Activated CD4-positive, alpha-beta memory T cell treated with anti-CD3 and anti-CD28 coated beads, Interleukin-2, amount 10 ng/mL, durations not matched to agents 7 days and 5 days (primary cell): ENCODE measurements at regions of chr17 and their contacts with region 1.

Region 1: GRCh38 chr17:48636177-48637018 is 10.2 kb upstream of the HOXB9 start:
- DNase-seq: peak; percentile 74
- H3K4me3 Mint-ChIP-seq: no peak overlapping the region
- H3K27ac Mint-ChIP-seq: no peak overlapping the region
- H3K4me1 Mint-ChIP-seq: peaks cover 27% of the 10 kb centered on the region
- H3K27me3 Mint-ChIP-seq: peaks cover 93% of the 10 kb centered on the region

Region 2: DNA sequence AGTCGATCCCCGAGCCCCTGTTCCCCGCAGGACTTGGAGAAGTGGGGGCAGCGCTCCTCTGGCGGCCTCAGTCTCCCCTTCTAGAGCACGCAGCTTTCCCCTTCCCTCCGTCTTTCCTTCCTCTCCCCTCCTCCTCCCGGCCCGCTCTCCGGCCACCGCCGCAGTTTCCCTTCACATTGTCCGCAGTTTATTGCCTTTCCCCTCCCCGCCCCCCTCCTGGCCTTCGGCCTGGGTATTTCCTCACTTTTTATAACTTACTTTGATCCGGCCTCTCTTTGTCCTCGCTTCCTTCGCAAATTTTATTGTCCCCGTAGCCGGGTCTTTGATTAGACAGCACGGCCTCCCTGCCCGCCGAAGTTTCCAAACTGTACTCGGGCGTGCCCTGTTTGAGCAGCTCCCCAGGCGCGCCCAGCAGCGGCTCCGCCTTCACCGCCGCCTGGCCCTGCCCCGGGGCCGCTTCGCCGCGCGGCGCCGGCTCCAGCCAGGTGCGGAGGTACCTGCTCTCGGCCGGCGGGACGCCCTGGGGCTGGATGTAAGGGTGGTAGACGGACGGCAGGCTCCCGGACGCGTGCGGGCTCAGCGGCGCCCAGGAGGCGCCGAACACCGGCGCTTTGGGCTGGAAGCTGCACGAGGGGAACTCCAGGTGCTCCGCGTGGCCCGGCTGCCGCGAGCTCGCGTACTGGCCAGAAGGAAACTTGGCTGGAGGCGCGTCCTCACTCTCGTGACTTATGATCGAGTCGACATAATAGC is 10.7 kb before region 1 on chr17:
- CTCF ChIA-PET with region 1: interaction called, 27 read pairs
- POLR2A ChIA-PET with region 1: interaction called, 10 read pairs
- DNase-seq: peak; percentile 53
- H3K4me3 Mint-ChIP-seq: peak overlapping the region; percentile 74
- H3K27ac Mint-ChIP-seq: no peak overlapping the region
- H3K4me1 Mint-ChIP-seq: peaks cover 17% of the 10 kb centered on the region
- H3K27me3 Mint-ChIP-seq: peaks cover 92% of the 10 kb centered on the region

Region 3: GRCh38 chr17:48647103-48647962 is 10.9 kb after region 1 on chr17:
- CTCF ChIA-PET with region 1: interaction called, 13 read pairs
- POLR2A ChIA-PET with region 1: interaction called, 3 read pairs
- DNase-seq: no peak
- H3K4me3 Mint-ChIP-seq: peak overlapping the region; percentile 76
- H3K27ac Mint-ChIP-seq: no peak overlapping the region
- H3K4me1 Mint-ChIP-seq: peaks cover 26% of the 10 kb centered on the region
- H3K27me3 Mint-ChIP-seq: peaks cover 70% of the 10 kb centered on the region